ENCODE measurements at regions of chr10 and their contacts with region 1.

Region 1: GRCh38 chr10:86945361-86946212 is 11.8 kb downstream of the MMRN2 start:
- DNase-seq: no peak
- ATAC-seq: no peak
- H3K4me3 Mint-ChIP-seq: no peak overlapping the region
- H3K27ac Mint-ChIP-seq: no peak overlapping the region
- H3K4me1 Mint-ChIP-seq: peaks cover 4% of the 10 kb centered on the region
- H3K27me3 Mint-ChIP-seq: no peaks in the 10 kb centered on the region
- CTCF ChIP-seq: no peak

Region 2: GRCh38 chr10:86900955-86901354 is 44.6 kb before region 1 on chr10:
- CTCF ChIA-PET with region 1: no interaction called
- POLR2A ChIA-PET with region 1: no interaction called
- intact Hi-C with region 1: no loop called
- DNase-seq: no peak
- ATAC-seq: no peak
- H3K4me3 Mint-ChIP-seq: no peak overlapping the region
- H3K27ac Mint-ChIP-seq: no peak overlapping the region
- H3K4me1 Mint-ChIP-seq: no peaks in the 10 kb centered on the region
- H3K27me3 Mint-ChIP-seq: no peaks in the 10 kb centered on the region
- CTCF ChIP-seq: no peak

Region 3: DNA sequence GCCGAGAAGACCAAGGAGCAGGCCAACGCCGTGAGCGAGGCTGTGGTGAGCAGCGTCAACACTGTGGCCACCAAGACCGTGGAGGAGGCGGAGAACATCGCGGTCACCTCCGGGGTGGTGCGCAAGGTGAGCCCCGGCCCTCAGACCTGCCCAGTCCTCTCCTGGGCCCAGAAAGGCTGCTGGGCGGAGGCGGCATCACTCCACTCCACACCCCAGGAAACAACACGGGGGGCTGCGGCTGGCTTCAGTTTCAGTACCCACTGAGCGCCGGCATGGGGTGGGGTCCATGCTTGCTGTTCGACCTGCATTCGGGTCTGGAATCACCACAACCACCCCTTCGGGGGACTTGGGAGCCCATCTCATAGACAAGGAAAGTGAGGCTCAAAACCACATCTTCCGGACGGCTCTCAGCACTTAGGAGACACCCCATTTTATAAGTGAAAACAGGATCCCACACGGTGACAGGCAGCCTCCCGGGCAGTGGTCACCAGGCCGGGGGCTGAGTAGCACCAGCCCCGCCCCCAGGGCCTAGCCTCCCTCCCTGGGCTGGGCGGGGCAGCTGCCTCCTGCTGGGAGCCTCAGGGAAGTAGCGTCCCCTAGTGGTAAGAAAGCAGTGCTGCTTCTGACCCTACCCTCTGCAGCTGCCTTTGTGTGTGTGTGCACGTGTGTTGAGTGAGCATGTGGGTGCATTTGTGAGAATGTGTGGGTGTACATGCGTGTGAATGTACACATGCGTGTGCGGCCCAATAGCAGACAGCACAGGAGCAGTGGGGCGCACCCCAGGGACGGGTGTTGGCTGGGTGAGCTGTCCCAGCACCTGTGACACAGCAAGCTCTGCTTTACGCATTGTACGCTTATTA is 14.6 kb after region 1 on chr10:
- CTCF ChIA-PET with region 1: interaction called, 45 read pairs
- POLR2A ChIA-PET with region 1: interaction called, 4 read pairs
- intact Hi-C with region 1: no loop called
- DNase-seq: peak; percentile 53
- ATAC-seq: peak; percentile 94
- H3K4me3 Mint-ChIP-seq: no peak overlapping the region
- H3K27ac Mint-ChIP-seq: no peak overlapping the region
- H3K4me1 Mint-ChIP-seq: no peaks in the 10 kb centered on the region
- H3K27me3 Mint-ChIP-seq: no peaks in the 10 kb centered on the region
- CTCF ChIP-seq: peak; percentile 74

Region 4: GRCh38 chr10:86965986-86966654 is 20.5 kb after region 1 on chr10:
- CTCF ChIA-PET with region 1: interaction called, 45 read pairs
- POLR2A ChIA-PET with region 1: no interaction called
- intact Hi-C with region 1: no loop called
- DNase-seq: peak; percentile 27
- ATAC-seq: peak; percentile 13
- H3K4me3 Mint-ChIP-seq: peak overlapping the region; percentile 37
- H3K27ac Mint-ChIP-seq: peak overlapping the region; percentile 75
- H3K4me1 Mint-ChIP-seq: peaks cover 22% of the 10 kb centered on the region
- H3K27me3 Mint-ChIP-seq: no peaks in the 10 kb centered on the region
- CTCF ChIP-seq: no peak

Region 5: DNA sequence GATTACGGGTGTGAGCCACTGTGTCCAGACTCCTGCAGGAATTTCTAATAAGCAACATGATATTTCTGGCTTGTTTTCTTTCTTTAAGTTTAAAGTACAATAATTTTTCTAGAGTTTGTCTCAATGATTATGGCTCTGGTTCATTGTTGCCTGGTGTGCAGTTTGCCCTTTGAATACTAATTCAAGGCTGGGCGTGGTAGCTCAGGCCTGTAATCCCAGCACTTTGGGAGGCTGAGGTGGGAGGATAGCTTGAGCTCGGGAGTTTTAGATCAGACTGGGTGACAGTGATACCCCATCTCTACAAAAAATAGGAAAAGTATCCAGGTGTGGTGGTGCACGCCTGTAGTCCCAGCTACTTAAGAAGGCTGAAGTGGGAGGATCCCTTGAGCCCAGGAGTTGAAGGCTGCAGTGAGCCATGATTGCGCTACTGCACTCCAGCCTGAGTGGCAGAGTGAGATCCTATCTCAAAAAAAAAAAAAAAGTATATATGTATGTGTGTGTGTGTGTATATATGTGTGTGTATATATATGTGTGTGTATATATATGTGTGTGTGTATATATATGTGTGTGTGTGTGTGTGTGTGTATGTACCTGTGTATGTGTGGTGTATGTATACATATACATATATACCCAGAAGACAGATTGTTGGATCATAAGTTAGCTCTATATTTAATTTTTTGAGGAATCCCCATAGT is 30.9 kb after region 1 on chr10:
- CTCF ChIA-PET with region 1: no interaction called
- POLR2A ChIA-PET with region 1: no interaction called
- intact Hi-C with region 1: no loop called
- DNase-seq: no peak
- ATAC-seq: no peak
- H3K4me3 Mint-ChIP-seq: no peak overlapping the region
- H3K27ac Mint-ChIP-seq: no peak overlapping the region
- H3K4me1 Mint-ChIP-seq: peaks cover 4% of the 10 kb centered on the region
- H3K27me3 Mint-ChIP-seq: peaks cover 2% of the 10 kb centered on the region
- CTCF ChIP-seq: no peak